ENCODE measurements at regions of chr2 and their contacts with region 1.

Region 1: DNA sequence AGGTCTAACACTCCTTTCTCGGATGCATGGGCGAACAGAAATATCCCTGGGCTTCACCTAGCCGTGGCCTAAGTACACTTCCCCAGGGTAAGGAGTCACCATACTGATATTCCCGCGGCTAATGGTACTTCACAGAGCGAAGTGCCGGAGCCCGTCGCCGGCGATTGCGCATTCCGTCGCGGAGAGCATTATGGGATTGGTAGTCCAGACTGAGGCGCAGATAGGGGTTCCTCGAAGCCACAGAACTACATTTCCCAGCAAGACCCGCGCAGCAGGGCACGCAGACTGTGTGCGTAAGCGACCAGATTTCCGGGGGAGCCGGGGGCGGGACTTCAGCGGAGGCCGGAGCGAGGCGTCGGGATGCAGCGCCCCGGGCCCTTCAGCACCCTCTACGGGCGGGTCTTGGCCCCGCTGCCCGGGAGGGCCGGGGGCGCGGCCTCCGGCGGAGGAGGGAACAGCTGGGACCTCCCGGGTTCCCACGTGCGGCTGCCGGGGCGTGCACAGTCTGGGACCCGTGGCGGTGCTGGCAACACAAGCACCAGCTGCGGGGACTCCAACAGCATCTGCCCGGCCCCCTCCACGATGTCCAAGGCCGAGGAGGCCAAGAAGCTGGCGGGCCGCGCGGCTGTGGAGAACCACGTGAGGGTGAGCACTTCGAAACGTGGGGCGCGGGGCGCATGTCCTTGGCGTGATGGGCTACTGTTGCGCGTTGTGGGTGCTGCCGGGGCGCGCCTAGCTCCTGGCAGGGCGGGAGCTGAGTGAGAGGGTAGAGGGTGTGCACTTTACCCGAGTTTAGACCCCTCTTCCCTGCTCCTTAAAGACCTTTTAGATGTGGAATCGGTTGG is at the start of gene RPIA:
- DNase-seq: peak; percentile 99
- ATAC-seq: peak; percentile 96
- H3K4me3 Mint-ChIP-seq: peak within 1 kb of the TSS; percentile 95
- H3K27ac Mint-ChIP-seq: peak within 1 kb of the TSS; percentile 93
- H3K4me1 Mint-ChIP-seq: peaks cover 52% of the 10 kb centered on the region
- H3K27me3 Mint-ChIP-seq: no peaks in the 10 kb centered on the region
- total RNA-seq, gene RPIA: 38.3 to 65.4 TPM

Region 2: DNA sequence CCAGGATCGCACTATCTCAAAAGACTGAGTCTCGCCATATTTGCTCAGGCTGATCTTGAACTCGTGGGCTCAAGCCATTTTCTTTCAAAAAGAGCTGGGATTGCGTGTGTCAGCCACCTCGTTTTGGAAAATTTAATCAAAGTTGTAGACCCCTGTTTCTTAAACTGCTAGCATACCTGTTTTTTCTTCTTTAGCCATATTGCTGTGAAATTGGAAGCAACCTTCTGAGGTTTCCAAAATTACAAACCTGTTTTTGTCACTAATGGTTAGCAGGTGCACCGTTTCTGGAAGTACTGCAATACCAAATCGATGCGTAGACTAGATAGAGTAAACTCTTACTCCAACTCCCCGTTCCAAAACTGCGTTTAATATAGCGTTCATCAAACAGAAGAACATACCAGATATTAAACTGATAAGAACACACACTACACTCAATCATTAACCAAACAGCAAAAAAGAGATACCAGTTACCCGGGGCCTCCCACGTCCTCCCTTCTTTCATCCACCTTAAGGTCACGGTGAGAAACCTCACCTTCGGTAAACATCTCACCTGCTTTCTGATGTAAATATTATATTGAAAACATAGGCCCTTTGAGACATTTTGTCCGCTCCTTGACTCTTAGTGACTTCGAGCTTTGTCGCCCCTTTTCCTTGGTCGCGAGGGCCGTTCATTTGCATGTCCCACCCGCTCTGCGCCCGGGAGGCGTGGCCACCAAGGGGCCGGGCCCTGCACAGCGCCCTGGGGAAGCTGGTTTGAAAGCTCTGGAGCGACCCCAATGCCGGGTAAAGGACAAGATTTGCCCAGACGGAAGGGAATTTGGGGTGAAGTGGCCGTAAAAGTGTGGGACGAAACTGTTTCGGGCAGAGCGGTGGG is 675.2 kb before region 1 on chr2 and contains the start of gene RNU2-63P:
- CTCF ChIA-PET with region 1: no interaction called
- POLR2A ChIA-PET with region 1: no interaction called
- intact Hi-C with region 1: loop called in 1 of 2 experiments (anchors 5 kb)
- DNase-seq: peak; percentile 86
- ATAC-seq: peak; percentile 93
- H3K4me3 Mint-ChIP-seq: peak within 1 kb of the TSS; percentile 93
- H3K27ac Mint-ChIP-seq: peak within 1 kb of the TSS; percentile 99
- H3K4me1 Mint-ChIP-seq: peaks cover 16% of the 10 kb centered on the region
- H3K27me3 Mint-ChIP-seq: peaks cover 3% of the 10 kb centered on the region
- total RNA-seq, gene RNU2-63P: 1.7 to 8.5 TPM

Region 3: GRCh38 chr2:88590998-88591613 is 100.5 kb before region 1 on chr2:
- CTCF ChIA-PET with region 1: no interaction called
- POLR2A ChIA-PET with region 1: no interaction called
- intact Hi-C with region 1: loop called in 1 of 2 experiments (anchors 1 kb)
- DNase-seq: peak; percentile 49
- ATAC-seq: peak; percentile 88
- H3K4me3 Mint-ChIP-seq: no peak overlapping the region
- H3K27ac Mint-ChIP-seq: no peak overlapping the region
- H3K4me1 Mint-ChIP-seq: no peaks in the 10 kb centered on the region
- H3K27me3 Mint-ChIP-seq: no peaks in the 10 kb centered on the region

Region 4: GRCh38 chr2:88600038-88600465 is 91.5 kb before region 1 on chr2:
- CTCF ChIA-PET with region 1: no interaction called
- POLR2A ChIA-PET with region 1: interaction called, 5 read pairs
- intact Hi-C with region 1: loop called (anchors 1 kb)
- DNase-seq: peak; percentile 59
- ATAC-seq: peak; percentile 100
- H3K4me3 Mint-ChIP-seq: no peak overlapping the region
- H3K27ac Mint-ChIP-seq: no peak overlapping the region
- H3K4me1 Mint-ChIP-seq: peaks cover 43% of the 10 kb centered on the region
- H3K27me3 Mint-ChIP-seq: no peaks in the 10 kb centered on the region

Region 5: DNA sequence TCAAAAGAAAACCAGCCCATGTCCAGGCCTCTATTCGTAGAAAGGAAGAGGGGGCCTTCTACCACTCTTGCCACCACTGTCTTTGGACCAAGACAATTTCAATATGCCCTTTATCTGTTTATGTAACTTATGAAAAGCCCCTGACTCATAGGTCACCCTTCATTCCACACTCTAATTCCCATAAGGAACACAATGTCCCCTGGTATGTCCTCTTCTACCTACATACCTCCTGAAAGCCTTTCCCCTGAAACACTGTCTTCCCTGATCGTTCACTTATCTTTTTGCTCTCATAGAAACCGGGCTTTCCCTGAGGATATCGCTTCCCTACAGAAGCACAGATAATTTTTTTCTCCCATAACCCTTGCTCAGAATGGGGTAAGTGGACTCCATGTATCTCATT is 77.6 kb before region 1 on chr2:
- CTCF ChIA-PET with region 1: no interaction called
- POLR2A ChIA-PET with region 1: no interaction called
- intact Hi-C with region 1: no loop called
- DNase-seq: no peak
- ATAC-seq: no peak
- H3K4me3 Mint-ChIP-seq: no peak overlapping the region
- H3K27ac Mint-ChIP-seq: no peak overlapping the region
- H3K4me1 Mint-ChIP-seq: peaks cover 14% of the 10 kb centered on the region
- H3K27me3 Mint-ChIP-seq: no peaks in the 10 kb centered on the region

Region 6: DNA sequence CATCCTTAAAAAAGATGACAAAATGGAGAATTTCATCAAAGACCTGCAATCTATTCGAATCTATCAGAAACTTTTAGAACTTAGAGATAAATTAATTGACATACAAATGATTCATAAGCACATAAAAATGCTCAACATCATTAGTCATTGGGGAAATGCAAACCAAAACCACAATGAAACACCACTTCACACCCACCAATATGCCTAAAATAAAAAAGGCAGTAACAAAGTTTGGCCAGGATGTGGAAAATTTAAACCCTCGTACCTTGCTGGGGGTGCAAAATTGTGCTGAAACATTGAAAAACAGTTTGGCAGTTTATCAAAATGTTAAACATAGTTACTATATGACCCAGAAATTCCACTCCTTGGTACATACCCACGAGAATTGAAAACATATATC is 52.8 kb before region 1 on chr2:
- CTCF ChIA-PET with region 1: interaction called, 4 read pairs
- POLR2A ChIA-PET with region 1: no interaction called
- intact Hi-C with region 1: loop called in 1 of 2 experiments (anchors 2 kb)
- DNase-seq: peak; percentile 41
- ATAC-seq: peak; percentile 71
- H3K4me3 Mint-ChIP-seq: no peak overlapping the region
- H3K27ac Mint-ChIP-seq: no peak overlapping the region
- H3K4me1 Mint-ChIP-seq: peaks cover 23% of the 10 kb centered on the region
- H3K27me3 Mint-ChIP-seq: peaks cover 2% of the 10 kb centered on the region

Region 7: GRCh38 chr2:88753833-88754584 is 62.4 kb after region 1 on chr2:
- CTCF ChIA-PET with region 1: no interaction called
- POLR2A ChIA-PET with region 1: interaction called, 3 read pairs
- intact Hi-C with region 1: loop called (anchors 1 to 5 kb)
- DNase-seq: peak; percentile 64
- ATAC-seq: peak; percentile 92
- H3K4me3 Mint-ChIP-seq: no peak overlapping the region
- H3K27ac Mint-ChIP-seq: peak overlapping the region; percentile 99
- H3K4me1 Mint-ChIP-seq: peaks cover 54% of the 10 kb centered on the region
- H3K27me3 Mint-ChIP-seq: no peaks in the 10 kb centered on the region